MCF 10A (cell line): ENCODE measurements at regions of chr6 and their contacts with region 1.

Region 1: DNA sequence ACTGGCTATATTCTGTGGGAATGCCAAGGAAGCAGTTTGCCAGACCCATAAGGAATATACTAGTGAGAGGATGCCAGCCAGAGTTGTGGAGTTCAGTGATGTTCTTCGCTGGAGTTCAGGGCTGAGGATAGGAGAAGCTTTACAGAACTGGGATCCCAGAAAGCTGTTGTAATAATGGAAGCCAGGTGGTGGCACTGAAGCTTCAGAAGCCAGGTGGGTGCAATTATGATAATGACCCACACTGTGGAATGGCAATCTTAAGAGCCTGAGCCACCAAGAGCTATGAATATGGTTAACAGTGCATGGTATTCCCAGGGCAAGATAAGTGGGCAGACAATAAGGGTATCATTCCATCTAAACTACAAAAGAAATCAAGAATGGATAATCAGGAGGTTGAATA is 25.1 kb upstream of the ENPP1 start:
- DNase-seq: peak; percentile 23
- H3K4me3 Mint-ChIP-seq: no peak overlapping the region
- H3K27ac Mint-ChIP-seq: no peak overlapping the region
- H3K4me1 Mint-ChIP-seq: no peaks in the 10 kb centered on the region
- H3K27me3 Mint-ChIP-seq: no peaks in the 10 kb centered on the region
- CTCF ChIP-seq: no peak

Region 2: DNA sequence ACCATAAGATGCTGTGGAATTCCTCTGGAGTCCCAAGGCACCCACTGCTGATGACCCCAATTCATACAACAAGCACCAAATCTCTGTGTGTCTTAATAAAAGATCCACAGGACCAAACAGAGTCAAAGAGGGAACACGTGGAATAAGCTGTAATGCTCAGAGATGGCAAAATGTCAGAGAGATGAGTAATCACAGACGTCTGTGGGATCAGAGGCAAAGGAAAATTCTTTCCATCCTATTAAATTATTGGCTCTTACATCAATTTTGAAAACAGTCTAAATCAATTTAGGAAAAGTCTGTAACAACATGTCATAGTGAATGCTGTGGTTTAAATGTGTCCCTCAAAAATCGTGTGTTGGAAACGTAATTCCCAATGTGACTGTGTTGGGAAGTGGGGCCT is 1542.5 kb before region 1 on chr6:
- CTCF ChIA-PET with region 1: no interaction called
- POLR2A ChIA-PET with region 1: no interaction called
- intact Hi-C with region 1: no loop called
- DNase-seq: peak; percentile 28
- H3K4me3 Mint-ChIP-seq: no peak overlapping the region
- H3K27ac Mint-ChIP-seq: no peak overlapping the region
- H3K4me1 Mint-ChIP-seq: no peaks in the 10 kb centered on the region
- H3K27me3 Mint-ChIP-seq: no peaks in the 10 kb centered on the region
- CTCF ChIP-seq: no peak

Region 3: GRCh38 chr6:131469130-131469529 is 313.6 kb before region 1 on chr6:
- CTCF ChIA-PET with region 1: no interaction called
- POLR2A ChIA-PET with region 1: no interaction called
- intact Hi-C with region 1: no loop called
- DNase-seq: no peak
- H3K4me3 Mint-ChIP-seq: no peak overlapping the region
- H3K27ac Mint-ChIP-seq: no peak overlapping the region
- H3K4me1 Mint-ChIP-seq: no peaks in the 10 kb centered on the region
- H3K27me3 Mint-ChIP-seq: no peaks in the 10 kb centered on the region
- CTCF ChIP-seq: no peak

Region 4: GRCh38 chr6:131762984-131763383 is 19.8 kb before region 1 on chr6:
- CTCF ChIA-PET with region 1: no interaction called
- POLR2A ChIA-PET with region 1: no interaction called
- intact Hi-C with region 1: no loop called
- DNase-seq: no peak
- H3K4me3 Mint-ChIP-seq: no peak overlapping the region
- H3K27ac Mint-ChIP-seq: no peak overlapping the region
- H3K4me1 Mint-ChIP-seq: peaks cover 6% of the 10 kb centered on the region
- H3K27me3 Mint-ChIP-seq: no peaks in the 10 kb centered on the region
- CTCF ChIP-seq: no peak

Region 5: GRCh38 chr6:131803007-131803769 is 20.4 kb after region 1 on chr6:
- CTCF ChIA-PET with region 1: no interaction called
- POLR2A ChIA-PET with region 1: no interaction called
- intact Hi-C with region 1: no loop called
- DNase-seq: no peak
- H3K4me3 Mint-ChIP-seq: no peak overlapping the region
- H3K27ac Mint-ChIP-seq: no peak overlapping the region
- H3K4me1 Mint-ChIP-seq: peaks cover 5% of the 10 kb centered on the region
- H3K27me3 Mint-ChIP-seq: no peaks in the 10 kb centered on the region
- CTCF ChIP-seq: no peak

Region 6: DNA sequence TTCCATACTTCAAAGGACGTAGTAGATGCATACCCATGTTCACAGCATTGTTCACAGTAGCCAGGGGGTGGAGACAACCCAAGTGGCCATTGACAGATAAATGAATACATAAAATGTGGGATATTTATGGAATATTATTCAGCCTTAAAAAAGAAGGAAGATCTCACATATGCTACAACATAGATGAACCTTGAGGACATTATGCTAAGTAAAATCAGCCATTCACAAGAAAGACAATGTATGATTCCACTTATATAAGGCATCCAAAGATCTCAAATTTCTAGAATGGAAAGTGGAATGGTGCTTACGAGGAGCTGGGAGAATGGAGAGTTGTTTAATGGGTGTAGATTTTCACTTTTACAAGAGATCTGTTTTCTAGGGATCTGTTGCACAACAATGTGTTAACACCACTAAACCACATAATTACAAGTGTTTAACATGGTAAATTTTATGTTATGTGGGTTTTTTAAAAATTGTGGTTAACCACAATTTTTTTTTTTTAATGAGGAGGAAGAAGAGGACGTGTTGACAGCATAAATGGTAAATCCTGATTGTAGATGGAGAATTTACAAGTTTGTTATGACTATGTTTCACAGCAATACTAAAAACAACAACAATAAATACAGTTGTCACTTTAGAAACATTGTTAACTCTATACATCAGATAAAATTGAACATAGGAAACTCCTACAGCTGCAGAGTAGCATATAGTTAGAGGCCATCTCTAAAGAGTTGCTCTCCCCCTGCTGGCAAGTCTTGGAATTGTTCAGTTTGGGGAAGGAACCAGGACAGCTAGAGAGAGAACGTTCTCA is 126.8 kb after region 1 on chr6:
- CTCF ChIA-PET with region 1: interaction called, 33 read pairs
- POLR2A ChIA-PET with region 1: interaction called, 3 read pairs
- intact Hi-C with region 1: loop called (anchors 1 kb)
- DNase-seq: peak; percentile 86
- H3K4me3 Mint-ChIP-seq: no peak overlapping the region
- H3K27ac Mint-ChIP-seq: no peak overlapping the region
- H3K4me1 Mint-ChIP-seq: no peaks in the 10 kb centered on the region
- H3K27me3 Mint-ChIP-seq: peaks cover 27% of the 10 kb centered on the region
- CTCF ChIP-seq: peak; percentile 79